ENCODE measurements at regions of chr11 and their contacts with region 1.

Region 1: DNA sequence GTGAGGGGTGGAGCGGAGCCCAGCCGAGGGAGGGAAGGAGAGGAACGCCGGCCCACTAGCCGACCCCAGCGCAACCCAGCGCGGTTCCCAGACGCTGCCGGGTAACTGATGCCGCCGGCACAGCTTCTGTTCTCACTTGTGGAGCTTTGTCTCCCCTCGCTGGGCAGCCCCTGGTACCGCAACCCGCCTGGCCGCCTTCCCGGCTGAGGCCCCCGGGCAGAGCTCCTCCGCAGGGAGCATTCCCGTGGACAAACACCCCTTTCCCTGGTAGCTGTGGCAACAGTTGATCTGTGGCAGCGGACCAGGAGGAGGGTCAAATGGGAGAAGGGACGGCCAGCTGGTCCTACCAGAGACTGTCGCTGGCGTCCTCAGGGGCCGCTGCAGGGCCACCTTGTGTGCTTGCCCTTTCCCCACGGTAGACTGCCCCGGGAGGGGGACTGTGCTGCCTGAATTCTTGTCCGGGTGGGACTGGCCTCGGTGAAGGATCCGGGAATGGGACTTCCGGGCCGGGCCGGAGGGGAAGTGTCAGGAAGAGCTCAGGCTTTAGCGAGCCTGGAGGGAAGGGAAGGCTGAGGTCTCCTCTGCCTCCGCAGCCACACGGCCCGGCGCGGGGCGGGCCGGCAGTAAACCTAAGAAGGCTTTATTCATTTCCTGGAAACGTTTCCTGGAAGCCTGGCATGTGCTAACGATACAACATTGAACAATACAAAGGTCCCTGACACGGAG is 468.0 kb downstream of the OPCML start:
- DNase-seq: peak; percentile 82
- H3K4me3 ChIP-seq: peak overlapping the region; percentile 8 to 62 (median 28)
- H3K27ac ChIP-seq: peak overlapping the region in 7 of 8 donors; percentile 52 to 82 (median 70)
- H3K4me1 ChIP-seq: peaks cover 0 to 6% (median 0%) of the 10 kb centered on the region in 6 donors
- H3K27me3 ChIP-seq: peaks cover 0 to 42% (median 0%) of the 10 kb centered on the region in 7 donors
- CTCF ChIP-seq: peak in 10 of 11 experiments; percentile 14 to 71 (median 60)
- POLR2A ChIP-seq: no peak

Region 2: GRCh38 chr11:131694526-131695424 is 1369.5 kb before region 1 on chr11:
- intact Hi-C with region 1: loop called (anchors 10 kb)
- DNase-seq: peak; percentile 91
- H3K4me3 ChIP-seq: peak overlapping the region in 1 of 8 donors; percentile 13
- H3K27ac ChIP-seq: no peak overlapping the region
- H3K4me1 ChIP-seq: peaks cover 0 to 9% (median 2%) of the 10 kb centered on the region in 6 donors
- H3K27me3 ChIP-seq: peaks cover 0 to 87% (median 0%) of the 10 kb centered on the region in 7 donors
- CTCF ChIP-seq: peak; percentile 43 to 91 (median 85)
- POLR2A ChIP-seq: no peak

Region 3: DNA sequence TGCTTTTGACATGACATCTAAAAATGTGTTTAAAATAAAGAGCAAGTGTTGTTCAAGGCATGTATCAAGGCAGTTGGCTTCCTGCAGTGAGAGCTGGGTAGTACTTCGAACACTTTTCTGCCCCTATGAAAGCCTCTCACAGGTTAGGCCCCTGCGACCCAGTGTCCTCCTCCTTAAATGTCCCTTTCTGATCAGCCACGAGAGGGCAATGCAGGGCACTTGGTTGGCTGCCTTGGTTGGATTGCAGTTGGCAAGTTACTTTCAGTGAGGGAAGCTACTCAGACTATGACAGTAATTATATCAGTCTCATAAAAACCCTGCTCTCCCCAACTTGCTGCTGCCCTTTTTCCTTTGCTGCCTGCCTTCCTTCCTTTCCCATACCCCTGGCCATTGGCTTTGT is 950.1 kb before region 1 on chr11:
- intact Hi-C with region 1: loop called (anchors 5 kb)
- DNase-seq: no peak
- H3K4me3 ChIP-seq: no peak overlapping the region
- H3K27ac ChIP-seq: no peak overlapping the region
- H3K4me1 ChIP-seq: no peaks in the 10 kb centered on the region
- H3K27me3 ChIP-seq: no peaks in the 10 kb centered on the region
- CTCF ChIP-seq: peak in 7 of 11 experiments; percentile 20 to 45 (median 38)
- POLR2A ChIP-seq: no peak